Activated CD4-positive, alpha-beta T cell treated with anti-CD3 and anti-CD28 coated beads, Interleukin-2, amount 10 ng/mL, durations not matched to agents 24 days and 14 days (primary cell): ENCODE measurements at regions of chr3 and their contacts with region 1.

Region 1: GRCh38 chr3:9932843-9933560 is 632 bp upstream of the CRELD1 start:
- DNase-seq: peak; percentile 94
- H3K4me3 Mint-ChIP-seq: peak overlapping the region; percentile 96
- H3K27ac Mint-ChIP-seq: peak overlapping the region; percentile 96
- H3K4me1 Mint-ChIP-seq: peaks cover 36% of the 10 kb centered on the region
- H3K27me3 Mint-ChIP-seq: no peaks in the 10 kb centered on the region

Region 2: DNA sequence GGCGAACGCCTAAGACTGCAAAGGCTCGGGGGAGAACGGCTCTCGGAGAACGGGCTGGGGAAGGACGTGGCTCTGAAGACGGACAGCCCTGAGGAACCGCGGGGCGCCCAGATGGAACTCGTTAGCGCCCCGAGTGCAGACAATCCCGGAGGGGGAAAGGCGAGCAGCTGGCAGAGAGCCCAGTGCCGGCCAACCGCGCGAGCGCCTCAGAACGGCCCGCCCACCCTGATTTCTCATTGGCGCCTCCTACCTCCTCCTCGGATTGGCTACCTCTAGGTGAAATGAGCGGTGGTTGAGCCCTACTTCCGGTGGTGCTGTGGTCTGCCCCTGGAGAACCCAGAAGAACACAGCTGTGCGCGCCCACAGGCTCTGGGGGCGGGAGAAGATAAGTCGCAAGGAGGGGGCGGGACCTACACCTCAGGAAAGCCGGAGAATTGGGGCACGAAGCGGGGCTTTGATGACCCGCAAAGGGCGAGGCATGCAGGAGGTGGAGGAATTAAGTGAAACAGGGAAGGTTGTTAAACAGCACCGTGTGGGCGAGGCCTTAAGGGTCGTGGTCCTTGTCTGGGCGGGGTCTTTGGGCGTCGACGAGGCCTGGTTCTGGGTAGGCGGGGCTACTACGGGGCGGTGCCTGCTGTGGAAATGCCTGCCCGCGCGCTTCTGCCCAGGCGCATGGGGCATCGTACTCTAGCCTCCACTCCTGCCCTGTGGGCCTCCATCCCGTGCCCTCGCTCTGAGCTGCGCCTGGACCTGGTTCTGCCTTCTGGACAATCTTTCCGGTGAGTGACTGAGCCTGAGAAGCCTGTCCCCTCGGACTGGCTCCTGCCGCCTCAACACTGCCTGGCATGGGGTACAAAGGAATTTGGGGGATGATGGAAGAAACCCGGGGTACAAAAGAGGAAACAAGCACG is 183.1 kb before region 1 on chr3 and contains the start of gene OGG1:
- intact Hi-C with region 1: loop called (anchors 1 kb)
- DNase-seq: peak; percentile 99
- H3K4me3 Mint-ChIP-seq: peak within 1 kb of the TSS; percentile 91
- H3K27ac Mint-ChIP-seq: peak within 1 kb of the TSS; percentile 96
- H3K4me1 Mint-ChIP-seq: peaks cover 50% of the 10 kb centered on the region
- H3K27me3 Mint-ChIP-seq: no peaks in the 10 kb centered on the region
- total RNA-seq, gene OGG1: 37.0 and 41.1 TPM in 2 replicates

Region 3: DNA sequence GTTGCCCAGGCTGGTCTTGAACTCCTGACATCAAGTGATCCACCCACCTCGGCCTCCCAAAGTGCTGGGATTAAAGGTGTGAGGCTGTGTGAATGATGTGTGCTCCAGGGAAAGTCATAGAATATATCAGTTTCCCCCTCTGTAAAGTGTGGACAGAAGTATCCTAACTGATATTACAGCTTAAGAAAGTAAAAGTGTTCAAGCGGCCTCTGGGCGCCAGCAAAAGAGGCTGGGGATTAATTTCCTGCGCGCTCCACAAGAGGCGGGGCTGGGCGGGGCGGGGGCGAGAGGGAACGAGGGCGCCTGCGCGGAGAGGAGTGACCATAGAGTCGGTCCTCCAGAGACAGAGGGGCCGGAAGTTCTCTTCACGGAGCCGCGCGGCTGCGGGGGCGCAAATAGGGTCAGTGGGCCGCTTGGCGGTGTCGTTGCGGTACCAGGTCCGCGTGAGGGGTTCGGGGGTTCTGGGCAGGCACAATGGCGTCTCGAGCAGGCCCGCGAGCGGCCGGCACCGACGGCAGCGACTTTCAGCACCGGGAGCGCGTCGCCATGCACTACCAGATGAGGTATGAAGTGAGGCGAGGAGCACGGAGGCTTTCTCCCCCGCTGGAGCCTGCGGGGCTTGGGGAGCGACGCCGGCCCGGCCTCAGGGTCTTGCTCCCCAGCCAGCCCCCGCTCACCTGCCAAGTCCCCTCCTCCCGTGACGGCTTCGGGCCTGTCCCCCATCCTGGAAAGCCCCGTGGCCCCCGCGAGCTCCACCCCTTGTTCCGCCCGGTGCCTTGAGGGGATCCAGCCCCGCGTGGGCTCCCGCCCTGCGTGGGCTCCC is 42.5 kb before region 1 on chr3 and contains the start of gene JAGN1:
- intact Hi-C with region 1: loop called (anchors 1 kb)
- DNase-seq: peak; percentile 96
- H3K4me3 Mint-ChIP-seq: peak within 1 kb of the TSS; percentile 98
- H3K27ac Mint-ChIP-seq: peak within 1 kb of the TSS; percentile 99
- H3K4me1 Mint-ChIP-seq: peaks cover 33% of the 10 kb centered on the region
- H3K27me3 Mint-ChIP-seq: no peaks in the 10 kb centered on the region
- total RNA-seq, gene JAGN1: 39.5 and 41.0 TPM in 2 replicates

Region 4: GRCh38 chr3:9986237-9986725 is 53.3 kb after region 1 on chr3:
- intact Hi-C with region 1: loop called (anchors 1 kb)
- DNase-seq: no peak
- H3K4me3 Mint-ChIP-seq: peak overlapping the region; percentile 97
- H3K27ac Mint-ChIP-seq: peak overlapping the region; percentile 99
- H3K4me1 Mint-ChIP-seq: peaks cover 31% of the 10 kb centered on the region
- H3K27me3 Mint-ChIP-seq: no peaks in the 10 kb centered on the region

Region 5: DNA sequence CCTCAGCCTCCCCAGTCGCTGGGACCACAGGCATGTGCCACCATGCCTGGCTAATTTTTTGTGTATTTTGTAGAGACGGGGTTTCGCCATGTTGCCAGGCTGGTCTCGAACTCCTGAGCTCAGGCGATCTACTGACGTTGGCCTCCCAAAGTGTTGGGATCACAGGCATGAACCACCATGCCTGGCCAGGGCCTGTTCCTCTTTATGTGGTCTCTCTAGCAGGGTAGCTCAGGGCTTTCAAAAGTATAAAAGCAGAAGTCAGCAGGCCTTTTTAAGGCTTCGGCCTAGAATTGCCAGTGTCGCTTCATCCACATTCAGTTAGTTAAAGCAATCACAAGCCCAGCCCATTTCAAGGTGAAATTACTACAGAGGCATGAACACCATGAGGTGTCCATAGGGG is 216.2 kb after region 1 on chr3:
- intact Hi-C with region 1: no loop called
- DNase-seq: no peak
- H3K4me3 Mint-ChIP-seq: no peak overlapping the region
- H3K27ac Mint-ChIP-seq: no peak overlapping the region
- H3K4me1 Mint-ChIP-seq: peaks cover 17% of the 10 kb centered on the region
- H3K27me3 Mint-ChIP-seq: no peaks in the 10 kb centered on the region

Region 6: GRCh38 chr3:10248184-10249080 is 315.4 kb after region 1 on chr3 and contains the start of gene TATDN2:
- intact Hi-C with region 1: loop called (anchors 5 kb)
- DNase-seq: peak; percentile 98
- H3K4me3 Mint-ChIP-seq: peak within 1 kb of the TSS; percentile 92
- H3K27ac Mint-ChIP-seq: peak within 1 kb of the TSS; percentile 98
- H3K4me1 Mint-ChIP-seq: peaks cover 46% of the 10 kb centered on the region
- H3K27me3 Mint-ChIP-seq: no peaks in the 10 kb centered on the region
- total RNA-seq, gene TATDN2: 70.9 and 74.4 TPM in 2 replicates

Region 7: DNA sequence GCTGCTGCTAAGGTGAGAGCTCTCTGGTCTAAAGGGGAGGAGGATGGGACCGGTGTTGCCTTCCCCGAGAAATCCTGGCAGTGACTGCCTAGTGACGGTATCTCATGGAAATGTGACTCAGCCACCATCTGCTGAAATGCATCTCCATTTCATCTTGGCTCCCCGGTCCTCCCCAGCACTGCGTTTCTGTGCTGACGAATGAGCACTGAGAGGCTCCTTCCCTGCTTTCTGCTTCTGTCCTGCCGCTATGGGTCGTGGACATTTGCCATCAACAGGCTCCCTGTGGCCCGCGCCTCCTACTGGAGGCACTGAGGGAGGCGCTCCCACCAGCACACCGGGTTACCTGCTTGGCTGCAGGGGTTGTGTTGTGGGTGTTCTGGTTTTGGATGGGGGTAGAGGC is 401.5 kb after region 1 on chr3:
- intact Hi-C with region 1: no loop called
- DNase-seq: no peak
- H3K4me3 Mint-ChIP-seq: no peak overlapping the region
- H3K27ac Mint-ChIP-seq: no peak overlapping the region
- H3K4me1 Mint-ChIP-seq: peaks cover 10% of the 10 kb centered on the region
- H3K27me3 Mint-ChIP-seq: peaks cover 7% of the 10 kb centered on the region